Esophagus muscularis mucosa (tissue), 4 donors: ENCODE measurements at regions of chr6 and their contacts with region 1.

Region 1: GRCh38 chr6:25962149-25963127 is at the start of gene TRIM38:
- DNase-seq: peak; percentile 93
- H3K4me3 ChIP-seq: peak within 1 kb of the TSS; percentile 56 to 71 (median 62)
- H3K27ac ChIP-seq: peak within 1 kb of the TSS; percentile 85 to 89 (median 86)
- H3K4me1 ChIP-seq: peaks cover 26 to 55% (median 49%) of the 10 kb centered on the region in 4 donors
- H3K27me3 ChIP-seq: no peaks in the 10 kb centered on the region
- CTCF ChIP-seq: no peak
- EP300 ChIP-seq: no peak
- POLR2A ChIP-seq: peak; percentile 77
- total RNA-seq, gene TRIM38: 5.3 to 6.4 (median 5.9) TPM

Region 2: GRCh38 chr6:25995507-25995906 is 33.1 kb after region 1 on chr6:
- intact Hi-C with region 1: loop called (anchors 5 kb)
- DNase-seq: no peak
- H3K4me3 ChIP-seq: no peak overlapping the region
- H3K27ac ChIP-seq: no peak overlapping the region
- H3K4me1 ChIP-seq: peaks cover 11 to 26% (median 20%) of the 10 kb centered on the region in 4 donors
- H3K27me3 ChIP-seq: no peaks in the 10 kb centered on the region
- CTCF ChIP-seq: no peak
- EP300 ChIP-seq: no peak
- POLR2A ChIP-seq: no peak